ENCODE measurements at regions of chr16 and their contacts with region 1.

Region 1: GRCh38 chr16:75432828-75433731 is at the start of gene CFDP1:
- DNase-seq: peak; percentile 96 to 99 (median 98)
- ATAC-seq: peak; percentile 97 to 98 (median 98)
- H3K4me3 ChIP-seq: peak within 1 kb of the TSS; percentile 49 to 96 (median 88)
- H3K27ac ChIP-seq: peak within 1 kb of the TSS; percentile 85 to 98 (median 96)
- H3K4me1 ChIP-seq: peaks cover 0 to 27% (median 12%) of the 10 kb centered on the region in 12 donors
- H3K27me3 ChIP-seq: no peaks in the 10 kb centered on the region
- CTCF ChIP-seq: peak in 1 of 12 donors; percentile 39
- POLR2A ChIP-seq: peak in 1 of 2 donors; percentile 80
- total RNA-seq, gene CFDP1: 17.7 to 31.2 (median 24.9) TPM

Region 2: GRCh38 chr16:75464130-75464918 is 31.2 kb after region 1 on chr16 and contains the start of gene TMEM170A:
- intact Hi-C with region 1: loop called in 1 of 10 experiments (anchors 1 kb)
- DNase-seq: peak; percentile 99 to 100 (median 100)
- ATAC-seq: peak; percentile 97 to 99 (median 98)
- H3K4me3 ChIP-seq: peak within 1 kb of the TSS; percentile 67 to 100 (median 90)
- H3K27ac ChIP-seq: peak within 1 kb of the TSS; percentile 84 to 100 (median 96)
- H3K4me1 ChIP-seq: peaks cover 0 to 39% (median 13%) of the 10 kb centered on the region in 12 donors
- H3K27me3 ChIP-seq: no peaks in the 10 kb centered on the region
- CTCF ChIP-seq: peak in 11 of 12 donors; percentile 100
- POLR2A ChIP-seq: peak; percentile 73 to 97
- total RNA-seq, gene TMEM170A: 7.7 to 14.6 (median 9.5) TPM

Measured in heart left ventricle (tissue), 16 donors.